Panc1 (cell line): ENCODE measurements at regions of chr1 and their contacts with region 1.

Region 1: DNA sequence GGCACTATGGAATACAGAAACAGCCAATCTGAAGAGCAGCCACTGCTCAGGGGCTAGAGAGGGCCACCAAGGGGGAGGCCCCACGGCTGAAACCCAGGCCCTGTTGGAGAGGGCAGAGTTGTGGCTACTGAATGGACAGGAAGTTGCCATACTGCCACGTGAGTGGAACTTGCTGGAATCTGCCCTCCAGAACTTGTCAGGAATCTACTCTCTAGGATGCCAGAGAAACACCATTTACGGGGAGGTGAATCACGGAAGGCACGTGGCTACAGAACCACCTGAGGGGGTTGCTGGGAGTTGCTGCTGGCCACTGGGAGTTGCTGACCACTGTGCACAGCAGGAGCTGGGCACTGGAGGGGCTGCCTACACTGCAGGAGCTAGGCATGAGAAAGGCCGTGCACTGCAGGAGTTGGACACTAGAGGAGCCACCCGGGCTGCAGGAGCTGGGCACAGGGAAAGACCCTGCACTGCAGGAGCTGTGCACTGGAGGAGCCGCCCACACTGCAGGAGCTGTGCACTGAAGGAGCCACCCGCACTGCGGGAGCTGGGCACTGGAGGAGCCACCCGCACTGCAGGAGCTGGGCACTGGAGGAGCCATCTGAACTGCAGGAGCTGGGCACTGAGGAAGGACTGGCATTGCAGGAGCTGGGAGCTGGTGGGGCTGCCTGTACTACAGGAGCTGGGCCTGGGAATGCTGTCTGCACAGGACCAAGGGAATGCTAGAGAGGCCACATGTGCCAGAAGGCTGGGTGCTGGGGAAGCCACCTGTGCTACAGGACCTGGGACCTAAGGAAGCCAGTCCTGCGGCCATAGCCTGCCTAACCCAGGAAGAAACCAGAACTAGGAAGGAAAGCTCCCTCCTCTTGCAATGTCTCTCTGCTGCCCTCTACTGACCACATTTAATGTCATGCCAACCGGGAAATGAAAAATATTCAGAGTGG is 343.4 kb downstream of the MATN1 start:
- DNase-seq: peak; percentile 63
- ATAC-seq: peak; percentile 90
- H3K4me3 ChIP-seq: no peak overlapping the region
- H3K27ac ChIP-seq: no peak overlapping the region
- H3K4me1 ChIP-seq: 0 out of 2 replicates have a peak, but pooled peaks cover 2% of the 10 kb centered on the region
- H3K27me3 ChIP-seq: no peaks in the 10 kb centered on the region; the same call in 1 of the 2 replicates
- CTCF ChIP-seq: peak; percentile 95

Region 2: GRCh38 chr1:30363031-30363430 is 16.9 kb before region 1 on chr1:
- CTCF ChIA-PET with region 1: interaction called, 13 read pairs
- POLR2A ChIA-PET with region 1: no interaction called
- in situ Hi-C with region 1: no loop called
- intact Hi-C with region 1: no loop called
- DNase-seq: no peak
- ATAC-seq: no peak
- H3K4me3 ChIP-seq: no peak overlapping the region
- H3K27ac ChIP-seq: no peak overlapping the region
- H3K4me1 ChIP-seq: no peaks in the 10 kb centered on the region
- H3K27me3 ChIP-seq: no peaks in the 10 kb centered on the region
- CTCF ChIP-seq: no peak

Region 3: GRCh38 chr1:30399026-30399425 is 19.1 kb after region 1 on chr1:
- CTCF ChIA-PET with region 1: interaction called, 14 read pairs
- POLR2A ChIA-PET with region 1: no interaction called
- in situ Hi-C with region 1: no loop called
- intact Hi-C with region 1: no loop called
- DNase-seq: no peak
- ATAC-seq: no peak
- H3K4me3 ChIP-seq: no peak overlapping the region
- H3K27ac ChIP-seq: no peak overlapping the region
- H3K4me1 ChIP-seq: no peaks in the 10 kb centered on the region
- H3K27me3 ChIP-seq: no peaks in the 10 kb centered on the region; the same call in 1 of the 2 replicates
- CTCF ChIP-seq: no peak